H1 (cell line): ENCODE measurements at regions of chr11 and their contacts with region 1.

Region 1: DNA sequence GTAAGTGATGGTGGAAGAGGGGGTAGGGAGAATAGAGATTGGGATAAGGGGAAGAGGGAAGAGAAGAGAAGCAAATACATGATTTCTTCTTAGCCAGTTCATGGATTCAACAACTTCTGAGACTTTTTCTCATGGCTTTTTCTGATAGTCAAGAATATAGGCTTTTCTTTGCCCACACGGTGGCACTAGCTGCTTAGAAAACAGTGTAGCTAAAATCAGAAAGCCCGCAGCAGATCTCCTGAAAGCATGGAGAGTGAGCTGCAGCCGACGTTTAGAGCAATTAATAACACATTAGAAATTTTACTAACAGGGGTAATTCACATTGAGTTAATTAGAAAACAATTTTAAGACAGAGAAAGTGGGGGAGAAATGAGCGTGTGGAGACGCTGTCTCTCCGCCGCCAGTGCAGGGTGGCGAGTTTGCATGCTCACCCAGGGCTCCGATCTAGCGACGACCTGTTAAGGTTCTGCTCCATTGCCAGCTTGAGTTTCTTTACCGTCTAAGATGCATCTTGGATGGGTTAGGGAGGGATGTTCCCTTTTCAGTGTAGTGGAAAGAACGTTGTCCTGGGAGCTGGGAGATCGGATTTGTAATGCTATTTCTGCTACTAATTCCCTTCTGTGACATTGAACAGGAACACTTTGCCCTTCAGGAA is 3.3 kb upstream of the RAG1 start:
- DNase-seq: peak in 1 of 2 experiments; percentile 53
- H3K4me3 ChIP-seq: peak overlapping the region in 3 of 4 experiments; percentile 7 to 50 (median 20); a peak in 4 of 8 replicates
- H3K27ac ChIP-seq: no peak overlapping the region
- H3K4me1 ChIP-seq: no peaks in the 10 kb centered on the region
- H3K27me3 ChIP-seq: no peaks in the 10 kb centered on the region
- CTCF ChIP-seq: peak in 2 of 3 experiments; percentile 57 to 83; a peak in 3 of 4 replicates
- EP300 ChIP-seq: no peak
- POLR2A ChIP-seq: no peak
- RAD21 ChIP-seq: peak; percentile 85 to 89

Region 2: GRCh38 chr11:36577859-36578258 is 13.4 kb after region 1 on chr11:
- CTCF ChIA-PET with region 1: interaction called, 45 read pairs
- POLR2A ChIA-PET with region 1: interaction called, 3 read pairs
- DNase-seq: no peak
- H3K4me3 ChIP-seq: no peak overlapping the region
- H3K27ac ChIP-seq: no peak overlapping the region
- H3K4me1 ChIP-seq: no peaks in the 10 kb centered on the region
- H3K27me3 ChIP-seq: no peaks in the 10 kb centered on the region
- CTCF ChIP-seq: no peak
- EP300 ChIP-seq: no peak
- POLR2A ChIP-seq: no peak
- RAD21 ChIP-seq: no peak

Region 3: GRCh38 chr11:36608491-36609199 is 44.1 kb after region 1 on chr11:
- CTCF ChIA-PET with region 1: interaction called, 18 read pairs
- POLR2A ChIA-PET with region 1: no interaction called
- DNase-seq: no peak
- H3K4me3 ChIP-seq: no peak overlapping the region
- H3K27ac ChIP-seq: no peak overlapping the region
- H3K4me1 ChIP-seq: no peaks in the 10 kb centered on the region
- H3K27me3 ChIP-seq: no peaks in the 10 kb centered on the region
- CTCF ChIP-seq: no peak
- EP300 ChIP-seq: no peak
- POLR2A ChIP-seq: no peak
- RAD21 ChIP-seq: no peak

Region 4: GRCh38 chr11:36672813-36673450 is 108.4 kb after region 1 on chr11:
- CTCF ChIA-PET with region 1: interaction called, 50 read pairs
- POLR2A ChIA-PET with region 1: no interaction called
- DNase-seq: no peak
- H3K4me3 ChIP-seq: no peak overlapping the region
- H3K27ac ChIP-seq: no peak overlapping the region
- H3K4me1 ChIP-seq: no peaks in the 10 kb centered on the region
- H3K27me3 ChIP-seq: no peaks in the 10 kb centered on the region
- CTCF ChIP-seq: peak in 2 of 3 experiments; percentile 20 to 62; a peak in 2 of 4 replicates
- EP300 ChIP-seq: no peak
- POLR2A ChIP-seq: no peak
- RAD21 ChIP-seq: peak; percentile 31 to 32; a peak in 3 of 4 replicates

Region 5: GRCh38 chr11:36702330-36703055 is 138.0 kb after region 1 on chr11:
- CTCF ChIA-PET with region 1: interaction called, 55 read pairs
- POLR2A ChIA-PET with region 1: no interaction called
- DNase-seq: peak in 1 of 2 experiments; percentile 10
- H3K4me3 ChIP-seq: no peak overlapping the region
- H3K27ac ChIP-seq: no peak overlapping the region
- H3K4me1 ChIP-seq: peaks cover 0 to 9% (median 5%) of the 10 kb centered on the region in 4 experiments; a peak in 5 of 7 replicates
- H3K27me3 ChIP-seq: no peaks in the 10 kb centered on the region; a peak in 1 of 7 replicates
- CTCF ChIP-seq: peak in 2 of 3 experiments; percentile 92 to 96; a peak in 3 of 4 replicates
- EP300 ChIP-seq: no peak
- POLR2A ChIP-seq: no peak
- RAD21 ChIP-seq: peak; percentile 99

Region 6: DNA sequence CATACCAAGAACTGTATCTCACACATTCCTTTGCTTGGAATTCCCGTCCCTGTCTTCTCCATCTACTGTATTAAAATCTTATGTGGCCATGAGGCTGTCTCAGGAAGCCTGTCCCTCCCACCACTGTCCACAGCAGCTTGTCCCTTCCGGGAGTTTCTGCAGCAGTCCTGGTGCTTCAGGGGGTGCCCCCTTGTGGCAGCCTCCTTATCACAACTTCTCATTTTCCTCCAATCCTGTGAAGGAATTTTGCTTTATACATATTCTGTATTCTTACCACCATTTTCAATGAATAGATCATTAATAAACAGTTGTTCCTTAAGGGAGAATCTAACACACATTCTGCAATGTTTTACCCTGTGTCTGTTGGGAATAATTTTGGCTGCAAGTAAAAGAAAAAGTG is 253.9 kb after region 1 on chr11:
- CTCF ChIA-PET with region 1: interaction called, 11 read pairs
- POLR2A ChIA-PET with region 1: no interaction called
- DNase-seq: peak in 1 of 2 experiments; percentile 76
- H3K4me3 ChIP-seq: no peak overlapping the region
- H3K27ac ChIP-seq: no peak overlapping the region
- H3K4me1 ChIP-seq: no peaks in the 10 kb centered on the region
- H3K27me3 ChIP-seq: no peaks in the 10 kb centered on the region
- CTCF ChIP-seq: peak; percentile 62 to 69 (median 64)
- EP300 ChIP-seq: no peak
- POLR2A ChIP-seq: no peak
- RAD21 ChIP-seq: peak; percentile 43 to 58